ENCODE measurements at regions of chr16 and their contacts with region 1.

Region 1: DNA sequence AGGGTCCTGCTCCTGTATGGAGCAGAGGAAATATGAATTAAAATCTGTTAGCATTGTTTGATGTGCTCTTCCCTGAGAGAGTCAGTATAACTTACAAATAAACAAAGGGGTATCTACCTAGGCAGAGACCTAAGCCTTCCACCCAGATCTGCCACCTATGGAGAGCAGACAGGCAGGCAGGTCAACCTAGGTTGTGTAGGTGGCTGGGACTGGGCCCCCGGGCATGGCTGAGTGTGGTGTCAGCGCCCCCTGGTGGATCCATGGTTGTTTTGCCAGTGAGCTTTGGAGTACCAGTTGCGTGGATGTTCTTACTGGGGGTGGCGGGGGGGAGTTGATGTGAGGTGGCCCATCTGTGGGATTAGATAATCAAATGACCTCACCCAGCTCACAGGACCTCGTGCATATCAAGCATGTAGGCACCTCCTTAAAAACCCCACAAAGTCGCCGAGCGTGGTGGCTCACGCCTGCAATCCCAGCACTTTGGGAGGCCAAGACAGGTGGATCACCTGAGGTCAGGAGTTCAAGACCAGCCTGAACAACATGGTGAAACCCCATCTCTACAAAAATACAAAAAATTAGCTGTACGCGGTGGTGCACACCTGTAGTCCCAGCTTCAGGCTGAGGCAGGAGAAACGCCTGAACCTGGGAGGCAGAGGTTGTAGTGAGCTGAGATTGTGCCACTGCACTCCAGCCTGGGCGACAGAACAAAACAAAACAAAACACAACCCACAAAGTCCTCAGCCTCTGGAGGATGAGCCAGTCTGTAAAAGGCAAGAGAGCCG is 17.6 kb downstream of the DUS2 start:
- DNase-seq: peak; percentile 82
- ATAC-seq: peak; percentile 77
- H3K4me3 Mint-ChIP-seq: peak overlapping the region; percentile 77
- H3K27ac Mint-ChIP-seq: peak overlapping the region; percentile 86
- H3K4me1 Mint-ChIP-seq: peaks cover 63% of the 10 kb centered on the region
- H3K27me3 Mint-ChIP-seq: no peaks in the 10 kb centered on the region
- CTCF ChIP-seq: peak; percentile 73

Region 2: DNA sequence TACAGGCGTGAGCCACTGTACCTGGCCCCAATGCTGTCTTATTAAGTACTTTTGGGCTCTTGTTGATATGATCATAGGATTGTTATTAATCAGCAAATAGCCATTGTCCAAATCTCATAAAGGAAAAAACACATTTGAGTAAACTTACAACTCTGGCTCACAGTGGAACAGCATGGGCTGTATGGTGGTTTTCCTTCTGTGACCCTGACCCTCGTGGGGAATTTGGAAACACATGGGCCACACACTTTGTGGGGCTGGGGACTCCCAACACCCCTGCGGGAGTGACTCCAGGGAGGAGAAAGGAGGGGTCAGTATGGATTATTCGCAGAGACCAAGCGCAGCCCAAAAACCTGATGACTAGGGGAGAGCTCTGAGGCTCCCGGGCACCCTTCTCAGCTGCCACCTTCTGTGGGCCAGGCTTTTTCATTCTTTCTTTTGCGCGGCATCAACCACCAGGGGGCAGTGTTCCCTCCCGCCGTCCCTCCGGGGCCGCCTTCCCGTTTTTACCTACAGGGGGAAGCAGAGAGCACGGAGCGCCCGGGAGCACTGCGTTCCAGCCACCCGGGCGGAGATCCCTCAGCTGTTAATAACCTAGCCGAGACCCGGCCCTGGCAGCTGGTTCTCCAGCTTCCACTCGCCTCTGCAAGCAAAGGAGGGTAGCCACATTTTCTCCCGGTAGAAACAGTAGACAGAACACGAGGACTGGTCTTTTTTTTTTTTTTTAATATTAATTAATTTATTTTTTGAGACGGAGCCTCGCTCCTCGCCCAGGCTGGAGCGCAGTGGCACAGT is 224.3 kb before region 1 on chr16:
- CTCF ChIA-PET with region 1: interaction called, 20 read pairs
- POLR2A ChIA-PET with region 1: no interaction called
- intact Hi-C with region 1: loop called (anchors 1 kb)
- DNase-seq: peak; percentile 92
- ATAC-seq: peak; percentile 98
- H3K4me3 Mint-ChIP-seq: peak overlapping the region; percentile 65
- H3K27ac Mint-ChIP-seq: peak overlapping the region; percentile 24
- H3K4me1 Mint-ChIP-seq: peaks cover 6% of the 10 kb centered on the region
- H3K27me3 Mint-ChIP-seq: no peaks in the 10 kb centered on the region
- CTCF ChIP-seq: peak; percentile 94

Region 3: DNA sequence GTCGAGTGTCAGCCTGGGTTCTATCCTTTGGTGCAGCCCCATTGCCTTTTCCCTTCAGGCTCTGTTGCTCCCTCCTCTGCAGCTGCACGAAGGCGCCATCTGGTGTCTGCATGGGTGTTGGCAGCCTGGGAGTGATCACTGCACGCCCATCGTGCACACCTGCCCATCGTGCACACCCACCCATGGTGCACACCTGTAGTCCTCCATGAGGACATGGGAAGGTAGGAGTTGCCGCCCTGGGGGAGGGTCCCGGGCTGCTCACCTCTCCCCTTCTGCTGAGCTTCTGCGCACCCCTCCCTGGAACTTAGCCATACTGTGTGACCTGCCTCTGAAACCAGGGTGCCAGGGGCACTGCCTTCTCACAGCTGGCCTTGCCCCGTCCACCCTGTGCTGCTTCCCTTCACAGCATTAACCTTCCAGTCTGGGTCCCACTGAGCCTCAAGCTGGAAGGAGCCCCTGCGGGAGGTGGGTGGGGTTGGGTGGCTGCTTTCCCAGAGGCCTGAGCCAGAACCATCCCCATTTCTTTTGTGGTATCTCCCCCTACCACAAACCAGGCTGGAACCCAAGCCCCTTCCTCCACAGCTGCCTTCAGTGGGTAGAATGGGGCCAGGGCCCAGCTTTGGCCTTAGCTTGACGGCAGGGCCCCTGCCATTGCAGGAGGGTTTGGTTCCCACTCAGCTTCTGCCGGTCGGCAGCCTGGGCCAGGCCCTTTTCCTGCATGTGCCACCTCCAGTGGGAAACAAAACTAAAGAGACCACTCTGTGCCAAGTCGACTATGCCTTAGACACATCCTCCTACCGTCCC is 111.9 kb before region 1 on chr16:
- CTCF ChIA-PET with region 1: interaction called, 28 read pairs
- POLR2A ChIA-PET with region 1: no interaction called
- intact Hi-C with region 1: loop called (anchors 2 kb)
- DNase-seq: peak; percentile 64
- ATAC-seq: peak; percentile 90
- H3K4me3 Mint-ChIP-seq: no peak overlapping the region
- H3K27ac Mint-ChIP-seq: no peak overlapping the region
- H3K4me1 Mint-ChIP-seq: peaks cover 36% of the 10 kb centered on the region
- H3K27me3 Mint-ChIP-seq: no peaks in the 10 kb centered on the region
- CTCF ChIP-seq: peak; percentile 43

Region 4: DNA sequence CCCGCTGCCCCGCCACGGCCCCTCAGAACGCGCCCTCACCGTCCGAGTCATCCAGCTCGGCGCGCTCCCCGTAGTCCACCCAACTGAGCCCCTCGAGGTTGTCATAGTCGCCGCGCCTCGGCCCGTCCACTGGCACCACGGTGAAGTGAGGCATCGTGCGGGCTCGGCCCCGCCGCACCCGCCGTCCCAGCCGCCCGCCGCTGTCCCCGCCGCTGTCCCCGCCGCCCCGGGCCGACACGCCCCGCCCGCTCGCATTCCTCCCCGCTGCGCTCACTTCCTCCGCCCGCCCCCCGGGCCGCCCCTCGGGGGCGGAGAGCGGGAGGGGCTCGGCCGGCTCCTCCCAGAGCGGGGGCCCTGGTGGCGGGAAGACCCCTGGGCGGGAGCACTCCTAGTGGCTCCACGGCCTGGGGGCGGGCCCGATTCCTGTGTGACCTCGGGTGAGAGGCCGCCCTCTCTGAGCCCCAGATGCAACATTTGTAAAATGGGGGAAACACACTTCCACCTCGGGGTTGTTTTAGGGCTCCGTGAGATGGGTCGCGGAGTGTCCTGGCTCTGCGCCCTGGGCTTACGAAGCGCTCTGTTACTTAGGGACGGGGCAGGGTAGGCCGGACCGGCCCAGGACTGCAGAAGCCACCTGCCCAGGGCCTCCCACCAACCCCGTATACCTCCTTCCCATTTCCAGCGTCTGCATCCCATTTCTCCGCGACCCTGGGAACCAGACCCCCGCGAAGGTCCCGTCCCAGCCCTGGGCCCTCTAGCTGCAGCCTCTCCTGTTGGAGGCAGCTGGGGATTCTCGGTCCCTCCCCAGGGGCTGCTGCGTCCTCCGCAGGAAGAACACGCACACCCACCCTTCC is 72.1 kb before region 1 on chr16 and contains the start of gene SLC12A4:
- CTCF ChIA-PET with region 1: interaction called, 5 read pairs
- POLR2A ChIA-PET with region 1: interaction called, 3 read pairs
- intact Hi-C with region 1: loop called (anchors 1 kb)
- DNase-seq: peak; percentile 87
- ATAC-seq: peak; percentile 93
- H3K4me3 Mint-ChIP-seq: peak within 1 kb of the TSS; percentile 96
- H3K27ac Mint-ChIP-seq: peak within 1 kb of the TSS; percentile 80
- H3K4me1 Mint-ChIP-seq: peaks cover 28% of the 10 kb centered on the region
- H3K27me3 Mint-ChIP-seq: no peaks in the 10 kb centered on the region
- CTCF ChIP-seq: no peak
- total RNA-seq, gene SLC12A4: 24.6 and 37.9 TPM in 2 replicates

Region 5: DNA sequence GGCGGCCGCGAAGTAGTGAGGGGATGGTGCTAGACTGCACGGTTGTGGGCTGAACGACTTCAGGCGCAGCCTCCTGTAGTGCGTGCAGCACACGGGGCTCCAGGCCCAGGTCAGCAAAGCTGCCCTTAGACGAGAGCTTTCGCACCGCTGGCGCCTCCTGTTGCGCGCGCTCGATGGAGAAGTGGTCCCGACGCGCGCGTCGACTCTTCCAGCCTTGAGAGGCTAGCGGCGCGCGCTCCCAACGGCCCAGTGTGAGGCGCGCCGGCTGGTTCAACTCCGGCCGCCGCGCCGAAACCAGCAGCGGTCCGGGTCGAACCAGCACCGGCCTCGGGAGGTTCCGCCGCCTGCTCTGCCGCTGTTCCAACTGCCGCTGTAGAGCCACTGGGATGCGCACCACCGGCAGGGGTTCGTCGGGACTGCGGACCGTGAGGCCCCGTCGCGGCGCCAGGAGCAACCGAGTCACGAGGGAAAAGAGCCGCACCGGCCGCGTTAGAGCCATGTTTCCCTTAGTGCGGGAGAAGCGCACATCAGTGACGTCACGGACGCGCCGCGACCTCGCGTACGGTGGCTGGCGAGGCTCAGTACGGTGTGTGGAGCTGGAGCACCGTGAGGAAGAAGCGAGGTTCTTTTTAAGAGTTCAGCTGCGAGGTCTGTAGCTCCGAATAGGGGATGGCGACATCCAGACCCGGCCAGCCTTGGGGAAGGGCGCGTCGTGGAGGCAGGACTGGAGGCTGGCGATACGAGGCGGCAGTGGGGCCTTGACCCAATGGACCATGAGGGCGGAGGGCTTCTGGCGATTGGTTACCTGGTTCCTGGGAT is 17.8 kb before region 1 on chr16 and contains the starts of genes DDX28 and DUS2:
- CTCF ChIA-PET with region 1: interaction called, 6 read pairs
- POLR2A ChIA-PET with region 1: interaction called, 44 read pairs
- intact Hi-C with region 1: loop called (anchors 1 kb)
- DNase-seq: peak; percentile 97
- ATAC-seq: peak; percentile 93
- H3K4me3 Mint-ChIP-seq: peak within 1 kb of the TSS; percentile 99
- H3K27ac Mint-ChIP-seq: peak within 1 kb of the TSS; percentile 97
- H3K4me1 Mint-ChIP-seq: peaks cover 31% of the 10 kb centered on the region
- H3K27me3 Mint-ChIP-seq: no peaks in the 10 kb centered on the region
- CTCF ChIP-seq: no peak
- total RNA-seq, gene DDX28: 19.2 and 19.7 TPM in 2 replicates
- total RNA-seq, gene DUS2: 54.2 and 62.0 TPM in 2 replicates